ENCODE measurements at regions of chr3 and their contacts with region 1.

Region 1: GRCh38 chr3:33372218-33373081 is 67.8 kb downstream of the UBP1 start:
- DNase-seq: peak; percentile 20
- ATAC-seq: peak; percentile 58
- H3K4me3 Mint-ChIP-seq: no peak overlapping the region
- H3K27ac Mint-ChIP-seq: no peak overlapping the region
- H3K4me1 Mint-ChIP-seq: peaks cover 6% of the 10 kb centered on the region; the same call in 1 of the 2 replicates
- H3K27me3 Mint-ChIP-seq: no peaks in the 10 kb centered on the region; the same call in 1 of the 2 replicates
- CTCF ChIP-seq: peak; percentile 74

Region 2: DNA sequence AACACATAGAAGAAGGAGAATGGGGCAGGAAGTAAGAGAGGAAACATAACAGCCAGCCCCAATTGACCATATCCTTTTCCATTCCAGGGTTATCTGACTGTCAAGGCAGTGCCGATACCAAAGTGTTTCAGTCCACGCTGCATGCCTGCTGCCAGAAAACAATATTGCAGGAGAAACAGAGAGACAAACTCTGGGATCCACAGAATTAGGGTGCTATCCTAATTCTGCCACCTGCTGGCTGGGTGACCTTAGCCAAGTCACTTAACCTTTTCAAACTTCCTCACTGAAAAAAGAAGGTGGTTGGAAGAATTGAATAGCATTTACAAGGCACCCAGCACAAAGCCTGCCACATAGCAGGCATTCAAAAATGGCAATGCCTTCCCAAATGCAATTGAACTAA is 307.5 kb before region 1 on chr3:
- CTCF ChIA-PET with region 1: no interaction called
- POLR2A ChIA-PET with region 1: no interaction called
- DNase-seq: no peak
- ATAC-seq: no peak
- H3K4me3 Mint-ChIP-seq: no peak overlapping the region
- H3K27ac Mint-ChIP-seq: no peak overlapping the region
- H3K4me1 Mint-ChIP-seq: no peaks in the 10 kb centered on the region
- H3K27me3 Mint-ChIP-seq: no peaks in the 10 kb centered on the region
- CTCF ChIP-seq: no peak

Region 3: DNA sequence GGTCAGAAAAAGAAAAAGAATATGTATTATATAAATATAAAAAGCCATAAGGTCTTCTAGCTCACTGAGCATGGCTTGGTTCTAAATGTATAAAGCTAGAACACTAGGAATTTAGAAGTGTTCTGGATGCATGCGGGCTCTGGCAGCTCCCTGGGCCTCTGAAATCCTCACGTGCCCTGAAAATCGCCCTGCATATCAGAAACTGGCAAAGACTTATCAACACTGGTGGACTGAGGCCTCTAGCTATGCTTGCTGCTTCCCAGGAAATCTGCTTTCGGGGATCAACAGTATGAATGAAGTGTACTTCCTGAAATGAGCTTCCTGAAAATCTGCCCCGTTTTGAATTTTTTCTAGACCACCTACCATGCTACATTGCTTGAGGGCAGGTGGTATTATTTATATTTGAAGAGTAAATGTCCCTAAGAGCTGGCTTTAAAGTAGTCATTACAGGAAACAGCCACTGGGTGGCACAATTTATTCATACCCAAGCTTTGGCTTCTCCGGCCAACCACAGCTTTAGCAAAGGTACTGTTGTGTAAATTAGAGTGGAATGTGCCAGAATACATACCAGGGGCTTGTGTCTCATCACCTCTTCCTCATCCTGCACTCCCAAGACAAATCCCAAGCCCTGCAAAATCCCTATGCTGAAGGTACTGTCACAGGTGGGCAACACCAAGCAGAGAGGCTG is 241.0 kb before region 1 on chr3:
- CTCF ChIA-PET with region 1: interaction called, 167 read pairs
- POLR2A ChIA-PET with region 1: no interaction called
- DNase-seq: peak; percentile 63
- ATAC-seq: peak; percentile 97
- H3K4me3 Mint-ChIP-seq: no peak overlapping the region
- H3K27ac Mint-ChIP-seq: peak overlapping the region; percentile 71; the same call in 1 of the 2 replicates
- H3K4me1 Mint-ChIP-seq: peaks cover 16% of the 10 kb centered on the region
- H3K27me3 Mint-ChIP-seq: no peaks in the 10 kb centered on the region
- CTCF ChIP-seq: peak; percentile 52

Region 4: GRCh38 chr3:33167716-33168336 is 204.6 kb before region 1 on chr3:
- CTCF ChIA-PET with region 1: interaction called, 10 read pairs
- POLR2A ChIA-PET with region 1: no interaction called
- DNase-seq: no peak
- ATAC-seq: peak; percentile 59
- H3K4me3 Mint-ChIP-seq: no peak overlapping the region
- H3K27ac Mint-ChIP-seq: no peak overlapping the region
- H3K4me1 Mint-ChIP-seq: no peaks in the 10 kb centered on the region
- H3K27me3 Mint-ChIP-seq: no peaks in the 10 kb centered on the region
- CTCF ChIP-seq: no peak

Region 5: DNA sequence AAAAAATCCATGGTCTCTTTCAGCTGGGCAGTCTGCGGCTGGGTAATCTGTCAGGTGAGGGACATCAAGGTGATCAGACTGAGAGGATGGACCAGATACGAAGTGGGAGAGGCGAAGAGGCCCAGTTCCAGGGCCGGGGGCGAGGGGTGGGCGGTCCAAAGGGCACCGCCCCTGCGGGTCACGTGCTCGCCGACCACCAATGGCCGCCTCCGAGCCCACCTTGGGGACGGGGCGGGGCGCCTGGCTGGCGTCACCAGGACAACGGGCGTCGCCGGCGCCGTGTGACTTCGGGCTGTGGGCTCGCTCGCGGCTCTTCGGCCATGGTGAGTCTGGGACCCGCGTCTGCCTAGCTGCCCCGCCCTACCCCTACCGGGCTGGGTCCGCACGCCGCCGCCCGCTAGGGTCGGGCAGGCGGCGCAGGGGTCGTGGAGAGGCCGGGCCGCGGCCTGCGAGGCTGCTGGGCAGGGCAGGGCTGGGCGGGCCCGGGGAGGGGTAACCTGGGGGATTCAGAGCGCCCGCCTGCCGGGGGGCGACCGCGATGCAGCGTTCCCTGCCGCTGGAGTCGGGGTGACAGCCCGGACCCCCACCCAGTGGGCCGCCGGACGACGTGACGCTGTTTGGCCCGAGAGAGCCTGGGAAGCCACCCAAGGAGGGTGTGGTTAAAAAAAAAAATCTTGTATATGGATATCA is 95.1 kb before region 1 on chr3 and contains the start of gene FBXL2:
- CTCF ChIA-PET with region 1: interaction called, 13 read pairs
- POLR2A ChIA-PET with region 1: no interaction called
- DNase-seq: peak; percentile 94
- ATAC-seq: peak; percentile 99
- H3K4me3 Mint-ChIP-seq: peak within 1 kb of the TSS; percentile 70
- H3K27ac Mint-ChIP-seq: no peak within 1 kb of the TSS
- H3K4me1 Mint-ChIP-seq: peaks cover 8% of the 10 kb centered on the region
- H3K27me3 Mint-ChIP-seq: peaks cover 6% of the 10 kb centered on the region; the same call in 1 of the 2 replicates
- CTCF ChIP-seq: no peak
- total RNA-seq, gene FBXL2: 2.6 to 2.9 TPM (median 2.8 TPM) in 3 replicates

Region 6: GRCh38 chr3:33360136-33360825 is 12.2 kb before region 1 on chr3:
- CTCF ChIA-PET with region 1: interaction called, 27 read pairs
- POLR2A ChIA-PET with region 1: no interaction called
- DNase-seq: no peak
- ATAC-seq: no peak
- H3K4me3 Mint-ChIP-seq: no peak overlapping the region
- H3K27ac Mint-ChIP-seq: no peak overlapping the region
- H3K4me1 Mint-ChIP-seq: peaks cover 4% of the 10 kb centered on the region; the same call in 1 of the 2 replicates
- H3K27me3 Mint-ChIP-seq: no peaks in the 10 kb centered on the region
- CTCF ChIP-seq: no peak

Region 7: GRCh38 chr3:33668618-33669017 is 296.2 kb after region 1 on chr3:
- CTCF ChIA-PET with region 1: no interaction called
- POLR2A ChIA-PET with region 1: no interaction called
- DNase-seq: no peak
- ATAC-seq: no peak
- H3K4me3 Mint-ChIP-seq: no peak overlapping the region
- H3K27ac Mint-ChIP-seq: no peak overlapping the region
- H3K4me1 Mint-ChIP-seq: no peaks in the 10 kb centered on the region
- H3K27me3 Mint-ChIP-seq: no peaks in the 10 kb centered on the region
- CTCF ChIP-seq: no peak